Right ventricle myocardium superior (tissue), 1 donor: ENCODE measurements at regions of chr7 and their contacts with region 1.

Region 1: GRCh38 chr7:50206453-50207250 is 97.9 kb upstream of the IKZF1 start:
- DNase-seq: no peak
- ATAC-seq: peak; percentile 28

Region 2: GRCh38 chr7:50369143-50370026 is 162.7 kb after region 1 on chr7:
- intact Hi-C with region 1: no loop called
- DNase-seq: no peak
- ATAC-seq: no peak

Region 3: GRCh38 chr7:50418086-50418515 is 211.4 kb after region 1 on chr7:
- intact Hi-C with region 1: loop called (anchors 10 kb)
- DNase-seq: peak; percentile 80
- ATAC-seq: peak; percentile 88

Region 4: GRCh38 chr7:50513166-50513871 is 306.7 kb after region 1 on chr7:
- intact Hi-C with region 1: no loop called
- DNase-seq: no peak
- ATAC-seq: no peak

Region 5: DNA sequence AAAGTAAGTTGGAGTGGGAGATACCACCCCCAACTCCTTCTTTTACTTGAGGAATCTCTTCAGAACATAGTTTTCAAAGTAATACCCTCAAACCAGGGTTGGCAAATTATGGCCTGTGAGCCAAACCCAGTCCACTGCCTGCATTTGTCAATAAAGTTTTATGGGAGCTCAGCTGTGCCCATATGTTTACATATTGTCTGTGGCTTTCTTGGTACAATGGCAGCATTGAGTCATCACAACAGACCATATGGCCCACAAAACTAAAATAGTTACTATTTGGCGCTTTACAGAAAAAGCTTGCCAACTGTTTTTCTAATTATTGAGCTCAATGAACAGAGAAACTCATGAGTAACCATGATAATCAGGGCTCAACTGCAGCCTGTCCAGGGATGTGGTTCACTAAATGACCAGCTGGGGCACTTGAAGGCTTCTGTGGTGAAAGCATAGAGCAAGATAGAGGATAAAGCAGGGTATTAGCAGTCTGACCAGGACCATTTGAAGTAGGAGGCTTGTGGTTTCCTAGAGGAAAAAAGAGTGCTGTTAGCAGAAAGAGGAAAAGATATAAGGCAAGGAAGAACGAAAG is 772.1 kb after region 1 on chr7:
- intact Hi-C with region 1: no loop called
- DNase-seq: no peak
- ATAC-seq: no peak